CD4-positive, alpha-beta T cell (primary cell): ENCODE measurements at regions of chr16 and their contacts with region 1.

Region 1: GRCh38 chr16:82160226-82160625 is 9.8 kb downstream of the MPHOSPH6 start:
- DNase-seq: no peak
- ATAC-seq: no peak
- H3K4me3 ChIP-seq: no peak overlapping the region
- H3K4me3 Mint-ChIP-seq: no peak overlapping the region
- H3K27ac ChIP-seq: no peak overlapping the region
- H3K27ac Mint-ChIP-seq: no peak overlapping the region
- H3K4me1 ChIP-seq: no peaks in the 10 kb centered on the region
- H3K4me1 Mint-ChIP-seq: peaks cover 53% of the 10 kb centered on the region
- H3K27me3 ChIP-seq: no peaks in the 10 kb centered on the region
- H3K27me3 Mint-ChIP-seq: no peaks in the 10 kb centered on the region
- CTCF ChIP-seq: no peak

Region 2: DNA sequence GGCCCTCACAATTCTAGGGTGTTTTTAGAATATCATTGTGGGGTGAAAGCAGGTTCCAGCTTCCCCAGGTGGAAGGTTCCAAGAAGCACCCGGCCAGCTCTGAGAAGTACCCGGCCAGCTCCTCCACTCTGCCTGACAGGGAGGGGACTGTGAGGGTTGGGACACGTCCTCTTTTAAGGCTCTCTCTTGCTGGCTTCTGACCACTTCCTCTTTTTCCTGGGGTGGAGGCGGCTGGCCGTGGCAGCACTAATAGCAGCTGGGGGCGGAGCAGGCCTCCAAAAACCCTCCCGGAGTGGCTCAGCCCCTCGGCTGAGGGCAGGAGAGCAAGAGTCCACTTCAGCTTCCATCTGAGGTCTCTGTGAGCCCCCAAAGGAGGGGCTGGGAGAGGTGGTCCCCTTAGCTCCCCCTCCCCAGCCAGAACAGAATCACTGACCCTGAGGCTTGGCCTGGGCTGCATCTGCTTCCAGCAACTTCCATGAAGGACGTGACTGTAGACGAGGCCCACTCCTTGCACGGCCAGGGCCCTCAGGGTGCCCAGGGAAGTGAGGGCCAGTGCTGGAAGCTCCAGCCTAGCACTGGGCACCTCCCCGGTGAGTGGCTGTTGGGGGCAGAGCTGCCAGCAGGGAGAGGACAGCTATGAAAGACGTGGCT is 407.9 kb before region 1 on chr16:
- CTCF ChIA-PET with region 1: no interaction called
- POLR2A ChIA-PET with region 1: no interaction called
- intact Hi-C with region 1: loop called in 1 of 2 experiments (anchors 5 kb)
- DNase-seq: peak in 3 of 14 experiments; percentile 37 to 66 (median 56)
- ATAC-seq: no peak
- H3K4me3 ChIP-seq: no peak overlapping the region
- H3K4me3 Mint-ChIP-seq: no peak overlapping the region
- H3K27ac ChIP-seq: no peak overlapping the region
- H3K27ac Mint-ChIP-seq: no peak overlapping the region
- H3K4me1 ChIP-seq: peaks cover 5% of the 10 kb centered on the region
- H3K4me1 Mint-ChIP-seq: no peaks in the 10 kb centered on the region
- H3K27me3 ChIP-seq: no peaks in the 10 kb centered on the region
- H3K27me3 Mint-ChIP-seq: no peaks in the 10 kb centered on the region
- CTCF ChIP-seq: no peak

Region 3: GRCh38 chr16:81798311-81799137 is 361.7 kb before region 1 on chr16:
- CTCF ChIA-PET with region 1: no interaction called
- POLR2A ChIA-PET with region 1: no interaction called
- intact Hi-C with region 1: no loop called
- DNase-seq: no peak
- ATAC-seq: no peak
- H3K4me3 ChIP-seq: no peak overlapping the region
- H3K4me3 Mint-ChIP-seq: no peak overlapping the region
- H3K27ac ChIP-seq: peak overlapping the region in 1 of 2 donors; percentile 1
- H3K27ac Mint-ChIP-seq: no peak overlapping the region
- H3K4me1 ChIP-seq: peaks cover 10% of the 10 kb centered on the region
- H3K4me1 Mint-ChIP-seq: peaks cover 10% of the 10 kb centered on the region
- H3K27me3 ChIP-seq: no peaks in the 10 kb centered on the region
- H3K27me3 Mint-ChIP-seq: no peaks in the 10 kb centered on the region
- CTCF ChIP-seq: no peak

Region 4: GRCh38 chr16:82116535-82116934 is 43.7 kb before region 1 on chr16:
- CTCF ChIA-PET with region 1: no interaction called
- POLR2A ChIA-PET with region 1: no interaction called
- intact Hi-C with region 1: no loop called
- DNase-seq: no peak
- ATAC-seq: no peak
- H3K4me3 ChIP-seq: no peak overlapping the region
- H3K4me3 Mint-ChIP-seq: no peak overlapping the region
- H3K27ac ChIP-seq: no peak overlapping the region
- H3K27ac Mint-ChIP-seq: no peak overlapping the region
- H3K4me1 ChIP-seq: no peaks in the 10 kb centered on the region
- H3K4me1 Mint-ChIP-seq: no peaks in the 10 kb centered on the region
- H3K27me3 ChIP-seq: no peaks in the 10 kb centered on the region
- H3K27me3 Mint-ChIP-seq: no peaks in the 10 kb centered on the region
- CTCF ChIP-seq: no peak